HCT116 (cell line): ENCODE measurements at regions of chr21 and their contacts with region 1.

Region 1: GRCh38 chr21:35840197-35840799 is 220.0 kb downstream of the SETD4 start:
- DNase-seq: peak; percentile 72
- ATAC-seq: peak; percentile 73
- H3K4me3 ChIP-seq: no peak overlapping the region
- H3K27ac ChIP-seq: no peak overlapping the region
- H3K4me1 ChIP-seq: no peaks in the 10 kb centered on the region
- H3K27me3 ChIP-seq: no peaks in the 10 kb centered on the region
- CTCF ChIP-seq: peak; percentile 61 to 93 (median 81); a peak in 5 of 6 replicates
- POLR2A ChIP-seq: no peak
- RAD21 ChIP-seq: peak; percentile 85

Region 2: DNA sequence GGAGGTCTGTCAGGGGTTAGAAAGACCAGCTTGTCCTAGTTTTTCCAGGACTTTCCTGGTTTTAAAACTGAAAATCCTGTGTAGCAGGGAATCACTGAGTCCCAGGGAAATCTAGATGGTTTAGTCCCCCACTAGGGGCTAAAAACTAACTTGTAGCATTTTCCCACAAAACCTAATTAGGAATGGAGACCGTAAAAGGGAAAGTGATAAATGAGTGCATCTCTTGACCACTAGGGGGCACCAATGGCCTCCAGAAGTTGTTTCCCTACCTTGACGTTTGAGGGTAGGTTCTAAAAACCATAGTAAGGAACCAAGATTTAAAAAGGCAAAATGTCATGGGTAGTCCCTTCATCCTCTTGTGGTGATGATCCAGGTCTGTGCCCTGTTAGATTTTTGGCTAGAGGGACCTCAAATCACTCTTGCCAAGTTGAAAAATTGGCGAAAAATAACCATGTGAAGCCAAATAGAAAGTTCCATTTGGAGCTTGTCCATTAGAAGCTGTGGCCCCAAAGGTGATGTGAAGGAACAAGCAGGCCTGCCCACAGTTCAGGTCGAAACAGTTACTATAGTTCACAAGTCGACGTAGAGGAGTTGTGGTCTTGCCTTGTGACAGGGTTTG is 1147.0 kb before region 1 on chr21:
- CTCF ChIA-PET with region 1: interaction called, 20 read pairs
- POLR2A ChIA-PET with region 1: no interaction called
- RAD21 ChIA-PET with region 1: interaction called in 1 of 2 experiments, 4 read pairs
- intact Hi-C with region 1: loop called (anchors 5 kb)
- DNase-seq: peak; percentile 59
- ATAC-seq: peak; percentile 73
- H3K4me3 ChIP-seq: no peak overlapping the region
- H3K27ac ChIP-seq: no peak overlapping the region
- H3K4me1 ChIP-seq: peaks cover 10 to 15% of the 10 kb centered on the region in 2 experiments
- H3K27me3 ChIP-seq: peaks cover 3% of the 10 kb centered on the region; the same call in 1 of the 2 replicates
- CTCF ChIP-seq: peak; percentile 35 to 87 (median 78); a peak in 5 of 6 replicates
- POLR2A ChIP-seq: no peak
- RAD21 ChIP-seq: peak; percentile 76

Region 3: GRCh38 chr21:34745557-34746255 is 1094.6 kb before region 1 on chr21:
- CTCF ChIA-PET with region 1: interaction called, 36 read pairs
- POLR2A ChIA-PET with region 1: interaction called, 3 read pairs
- RAD21 ChIA-PET with region 1: interaction called in 1 of 2 experiments, 3 read pairs
- intact Hi-C with region 1: loop called (anchors 1 kb)
- DNase-seq: peak; percentile 77
- ATAC-seq: peak; percentile 94
- H3K4me3 ChIP-seq: peak overlapping the region in 1 of 2 experiments; percentile 8; a peak in 3 of 4 replicates
- H3K27ac ChIP-seq: peak overlapping the region; percentile 36; the same call in 1 of the 2 replicates
- H3K4me1 ChIP-seq: peaks cover 7 to 18% of the 10 kb centered on the region in 2 experiments; a peak in 3 of 4 replicates
- H3K27me3 ChIP-seq: no peaks in the 10 kb centered on the region; the same call in 1 of the 2 replicates
- CTCF ChIP-seq: peak; percentile 82 to 94 (median 90)
- POLR2A ChIP-seq: no peak
- RAD21 ChIP-seq: peak; percentile 98

Region 4: DNA sequence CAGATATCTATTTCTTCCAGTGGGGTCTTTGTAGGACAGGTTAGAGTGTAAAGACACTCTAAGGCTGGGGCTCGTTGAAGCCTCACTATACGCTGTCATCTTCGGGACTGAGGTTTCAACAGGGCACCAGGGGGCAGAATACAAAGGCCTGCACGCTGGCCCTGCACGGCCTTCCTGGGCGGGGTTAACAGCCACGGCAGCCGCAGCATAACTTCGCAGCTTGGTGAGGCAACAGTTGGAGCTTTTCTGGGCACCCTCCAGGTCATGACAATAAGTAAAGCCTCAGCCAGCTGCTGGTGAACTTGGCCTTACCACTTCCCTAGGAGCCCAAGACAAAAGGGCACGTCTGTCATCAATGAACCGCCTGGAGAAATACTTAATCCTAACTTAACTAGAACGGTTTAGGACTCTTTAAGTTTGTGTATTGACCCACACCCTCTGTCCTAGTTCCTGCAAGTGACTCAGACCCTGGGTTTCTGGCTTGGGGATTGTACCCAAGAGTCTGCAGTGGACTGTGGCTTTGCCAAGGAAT is 788.9 kb before region 1 on chr21:
- CTCF ChIA-PET with region 1: no interaction called
- POLR2A ChIA-PET with region 1: no interaction called
- RAD21 ChIA-PET with region 1: no interaction called
- intact Hi-C with region 1: loop called (anchors 5 kb)
- DNase-seq: peak; percentile 80
- ATAC-seq: peak; percentile 91
- H3K4me3 ChIP-seq: peak overlapping the region in 1 of 2 experiments; percentile 31; a peak in 2 of 4 replicates
- H3K27ac ChIP-seq: peak overlapping the region; percentile 43; the same call in 1 of the 2 replicates
- H3K4me1 ChIP-seq: peaks cover 27 to 50% of the 10 kb centered on the region in 2 experiments
- H3K27me3 ChIP-seq: no peaks in the 10 kb centered on the region
- CTCF ChIP-seq: peak; percentile 42 to 78 (median 75); a peak in 5 of 6 replicates
- POLR2A ChIP-seq: no peak
- RAD21 ChIP-seq: peak; percentile 76

Region 5: GRCh38 chr21:35400233-35400957 is 439.9 kb before region 1 on chr21:
- CTCF ChIA-PET with region 1: interaction called, 9 read pairs
- POLR2A ChIA-PET with region 1: no interaction called
- RAD21 ChIA-PET with region 1: no interaction called
- intact Hi-C with region 1: loop called (anchors 1 kb)
- DNase-seq: peak; percentile 81
- ATAC-seq: peak; percentile 96
- H3K4me3 ChIP-seq: no peak overlapping the region
- H3K27ac ChIP-seq: no peak overlapping the region
- H3K4me1 ChIP-seq: peaks cover 6 to 29% of the 10 kb centered on the region in 2 experiments; a peak in 3 of 4 replicates
- H3K27me3 ChIP-seq: no peaks in the 10 kb centered on the region
- CTCF ChIP-seq: peak; percentile 52 to 71 (median 65); a peak in 5 of 6 replicates
- POLR2A ChIP-seq: no peak
- RAD21 ChIP-seq: peak; percentile 89

Region 6: DNA sequence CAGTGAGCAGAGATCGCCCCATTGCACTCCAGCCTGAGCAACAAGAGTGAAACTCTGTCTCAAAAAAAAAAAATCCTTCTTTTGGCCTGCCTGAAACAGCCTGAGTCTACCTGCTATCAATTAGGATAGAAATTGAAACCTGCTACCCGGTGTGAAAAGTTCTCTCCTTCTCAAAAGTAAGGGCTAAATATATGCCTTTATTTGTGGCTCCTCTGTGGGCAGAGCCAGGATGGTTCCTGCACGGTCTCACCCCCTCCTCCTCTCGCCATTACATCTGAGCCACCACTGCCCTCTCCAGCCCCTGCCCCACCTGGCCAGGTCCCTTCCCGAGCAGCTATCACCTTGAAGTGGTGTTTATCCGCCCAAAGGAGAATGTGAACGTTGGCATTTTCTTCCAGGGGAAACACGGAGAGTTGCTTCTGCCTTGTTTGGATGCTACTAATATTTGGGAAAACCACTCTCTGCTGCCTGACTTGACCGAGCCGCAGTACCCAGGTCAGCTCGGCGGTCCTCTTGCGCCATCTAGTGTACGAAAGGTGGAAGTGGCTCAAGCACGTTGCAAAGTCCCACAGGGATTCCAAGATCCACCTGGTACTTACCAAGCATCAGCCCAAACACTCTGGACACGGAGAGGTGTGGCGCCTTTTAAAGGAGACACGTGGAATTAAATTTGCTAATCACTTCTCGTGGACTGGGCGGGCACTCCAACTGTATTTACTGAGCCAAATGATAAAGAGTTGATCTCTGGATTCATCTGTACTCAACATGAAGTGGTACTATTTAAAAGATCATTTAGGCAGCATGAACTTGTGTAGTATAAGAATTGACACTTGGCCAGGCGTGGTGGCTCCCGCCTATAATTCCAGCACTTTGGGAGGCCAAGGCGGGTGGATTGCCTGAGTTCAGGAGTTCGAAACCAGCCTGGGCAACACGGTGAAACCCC is 188.1 kb after region 1 on chr21:
- CTCF ChIA-PET with region 1: interaction called, 3 read pairs
- POLR2A ChIA-PET with region 1: no interaction called
- RAD21 ChIA-PET with region 1: interaction called in 1 of 2 experiments, 4 read pairs
- intact Hi-C with region 1: loop called (anchors 1 kb)
- DNase-seq: peak; percentile 64
- ATAC-seq: peak; percentile 98
- H3K4me3 ChIP-seq: no peak overlapping the region
- H3K27ac ChIP-seq: no peak overlapping the region
- H3K4me1 ChIP-seq: peaks cover 0 to 2% of the 10 kb centered on the region in 2 experiments; a peak in 1 of 4 replicates
- H3K27me3 ChIP-seq: no peaks in the 10 kb centered on the region
- CTCF ChIP-seq: peak; percentile 52 to 98 (median 94); a peak in 5 of 6 replicates
- POLR2A ChIP-seq: no peak
- RAD21 ChIP-seq: peak; percentile 89